Activated CD4-positive, alpha-beta T cell treated with anti-CD3 and anti-CD28 coated beads for 36 hours (primary cell): ENCODE measurements at regions of chr3 and their contacts with region 1.

Region 1: DNA sequence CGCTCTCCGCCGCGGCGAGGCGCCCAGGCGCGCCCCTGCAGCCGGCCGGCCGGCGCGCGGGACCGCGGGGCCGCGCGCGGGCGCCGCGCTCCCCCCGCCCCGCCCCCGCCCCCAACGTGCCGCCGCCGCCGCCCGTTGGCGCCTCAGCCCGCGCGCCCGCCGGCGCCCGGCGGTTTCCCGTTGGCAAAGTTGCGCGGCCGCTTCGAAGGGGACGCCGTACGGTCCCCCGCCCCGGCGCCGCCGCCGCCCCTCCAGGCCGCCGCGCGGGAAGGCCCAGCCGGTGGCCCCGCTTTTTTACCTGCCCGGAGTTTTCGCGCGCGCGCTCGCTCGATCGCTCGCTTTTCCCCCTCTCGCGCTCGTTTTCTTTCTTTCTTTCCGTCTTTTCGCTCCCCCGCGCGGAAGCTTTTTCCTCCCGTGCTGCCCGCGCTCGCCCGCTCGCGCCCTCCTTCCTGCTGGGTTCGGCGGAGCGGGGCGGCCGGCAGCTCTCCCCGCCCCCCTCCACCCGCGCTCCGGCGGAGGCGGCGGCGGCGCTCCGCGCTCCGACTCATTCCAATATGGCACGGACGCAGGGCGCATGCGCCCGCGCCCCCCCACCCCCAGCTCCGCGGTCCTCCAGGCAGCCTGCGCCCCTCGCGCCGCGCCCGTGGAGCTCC is at the start of gene SFMBT1:
- DNase-seq: peak; percentile 87
- ATAC-seq: peak; percentile 62
- H3K4me3 Mint-ChIP-seq: peak within 1 kb of the TSS; percentile 93
- H3K27ac Mint-ChIP-seq: peak within 1 kb of the TSS; percentile 96
- H3K4me1 Mint-ChIP-seq: peaks cover 43% of the 10 kb centered on the region
- H3K27me3 Mint-ChIP-seq: no peaks in the 10 kb centered on the region
- total RNA-seq, gene SFMBT1: 14.5 to 20.3 TPM

Region 2: DNA sequence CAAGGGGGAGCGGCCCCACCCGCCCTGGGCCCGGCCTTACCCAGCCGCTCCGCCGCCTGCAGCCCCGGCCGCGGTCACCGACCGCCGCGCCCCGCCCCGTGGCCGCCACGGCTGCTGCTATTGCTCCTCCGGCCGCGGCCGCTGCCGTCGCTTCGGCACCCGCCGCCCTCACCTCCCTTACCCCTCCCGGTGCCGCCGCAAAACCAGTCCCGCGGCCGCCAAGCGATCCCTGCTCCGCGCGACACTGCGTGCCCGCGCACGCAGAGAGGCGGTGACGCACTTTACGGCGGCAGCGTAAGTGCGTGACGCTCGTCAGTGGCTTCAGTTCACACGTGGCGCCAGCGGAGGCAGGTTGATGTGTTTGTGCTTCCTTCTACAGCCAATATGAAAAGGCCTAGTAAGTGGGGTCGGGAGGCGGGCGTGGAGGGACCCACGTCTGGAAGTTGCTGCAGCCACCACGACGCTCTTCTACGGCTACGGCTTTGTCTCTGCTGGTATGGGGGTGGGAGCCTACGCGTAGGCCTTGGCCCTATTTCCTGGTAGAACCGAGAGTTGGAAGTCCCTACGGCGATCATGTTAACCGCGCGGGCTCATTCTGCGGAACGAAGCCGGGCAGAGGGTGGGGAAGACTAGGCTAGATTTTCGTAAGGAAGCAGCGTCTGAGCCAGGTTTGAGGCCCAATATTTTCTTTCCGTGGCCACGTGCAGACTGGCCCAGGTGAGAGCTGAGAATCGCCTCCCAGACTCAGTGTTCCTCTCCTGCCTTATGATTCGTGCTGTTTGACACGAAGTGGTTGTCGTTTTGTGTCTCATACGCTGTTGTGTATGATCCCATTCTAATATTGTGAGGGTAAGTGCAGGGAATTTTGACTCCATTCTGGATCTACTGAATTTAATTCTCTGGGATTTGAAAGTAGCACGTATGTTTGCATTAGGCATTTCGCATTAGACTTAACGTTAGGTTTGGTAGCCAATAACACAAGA is 359.6 kb before region 1 on chr3 and contains the starts of genes GNL3 and PBRM1:
- CTCF ChIA-PET with region 1: no interaction called
- POLR2A ChIA-PET with region 1: no interaction called
- intact Hi-C with region 1: loop called in 1 of 2 experiments (anchors 1 kb)
- DNase-seq: peak; percentile 97
- ATAC-seq: peak; percentile 70
- H3K4me3 Mint-ChIP-seq: peak within 1 kb of the TSS; percentile 99
- H3K27ac Mint-ChIP-seq: peak within 1 kb of the TSS; percentile 99
- H3K4me1 Mint-ChIP-seq: peaks cover 75% of the 10 kb centered on the region
- H3K27me3 Mint-ChIP-seq: no peaks in the 10 kb centered on the region
- total RNA-seq, gene GNL3: 206 to 218 TPM
- total RNA-seq, gene PBRM1: 57.6 to 59.8 TPM

Region 3: DNA sequence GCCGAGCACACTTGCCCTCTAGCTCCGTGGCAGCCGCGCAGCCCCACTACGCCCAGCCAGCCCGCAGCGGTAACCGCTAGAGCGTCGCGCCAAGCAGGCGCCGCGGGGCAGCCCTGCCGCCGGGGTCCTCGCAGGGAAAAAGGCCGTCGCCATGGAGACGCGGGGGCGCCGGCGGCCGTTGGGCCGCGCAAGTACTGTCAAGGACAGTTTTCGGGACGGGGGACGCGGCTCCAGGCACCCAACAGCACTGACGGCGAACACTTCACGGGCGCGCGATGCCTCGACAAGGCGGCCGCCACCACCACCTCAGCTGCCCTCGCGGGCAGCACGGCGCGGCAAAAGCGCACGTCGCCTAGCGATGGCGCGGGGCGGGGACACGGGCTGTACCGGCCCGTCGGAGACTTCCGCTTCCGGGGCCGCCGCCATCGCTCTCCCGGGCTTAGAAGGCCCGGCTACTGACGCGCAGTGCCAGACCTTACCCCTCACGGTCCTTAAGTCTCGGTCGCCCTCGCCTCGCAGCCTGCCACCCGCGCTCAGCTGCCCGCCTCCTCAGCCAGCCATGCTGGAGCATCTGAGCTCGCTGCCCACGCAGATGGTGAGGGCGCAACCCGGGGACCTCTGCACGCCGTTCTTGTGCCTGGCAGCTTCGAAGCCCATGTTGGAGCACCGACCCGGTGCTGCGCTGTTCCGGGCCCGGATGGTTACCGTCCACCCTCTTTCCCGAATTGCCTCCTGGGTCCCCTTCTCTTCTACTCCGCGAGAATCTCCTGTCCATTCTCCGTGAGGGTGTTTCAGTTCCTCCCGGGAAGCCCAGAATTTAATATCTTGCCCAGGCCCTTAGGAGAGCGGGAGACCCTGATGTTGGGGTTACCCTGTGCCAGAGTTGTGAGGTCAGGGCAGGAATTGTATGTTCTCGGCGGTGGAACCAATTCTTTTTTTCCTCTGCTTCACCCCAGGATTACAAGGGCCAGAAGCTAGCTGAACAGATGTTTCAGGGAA is 339.7 kb before region 1 on chr3 and contains the starts of genes GLT8D1 and SPCS1:
- CTCF ChIA-PET with region 1: no interaction called
- POLR2A ChIA-PET with region 1: no interaction called
- intact Hi-C with region 1: loop called (anchors 1 to 10 kb)
- DNase-seq: peak; percentile 92
- ATAC-seq: peak; percentile 94
- H3K4me3 Mint-ChIP-seq: peak within 1 kb of the TSS; percentile 89
- H3K27ac Mint-ChIP-seq: peak within 1 kb of the TSS; percentile 90
- H3K4me1 Mint-ChIP-seq: peaks cover 28% of the 10 kb centered on the region
- H3K27me3 Mint-ChIP-seq: no peaks in the 10 kb centered on the region
- total RNA-seq, gene GLT8D1: 35.2 to 38.0 TPM
- total RNA-seq, gene SPCS1: 111 to 120 TPM

Region 4: GRCh38 chr3:52934630-52935530 is 110.8 kb before region 1 on chr3:
- CTCF ChIA-PET with region 1: interaction called, 5 read pairs
- POLR2A ChIA-PET with region 1: interaction called, 4 read pairs
- intact Hi-C with region 1: loop called in 1 of 2 experiments (anchors 1 kb)
- DNase-seq: peak; percentile 75
- ATAC-seq: peak; percentile 99
- H3K4me3 Mint-ChIP-seq: no peak overlapping the region
- H3K27ac Mint-ChIP-seq: no peak overlapping the region
- H3K4me1 Mint-ChIP-seq: peaks cover 12% of the 10 kb centered on the region
- H3K27me3 Mint-ChIP-seq: no peaks in the 10 kb centered on the region

Region 5: GRCh38 chr3:53072653-53073552 is 27.3 kb after region 1 on chr3:
- CTCF ChIA-PET with region 1: no interaction called
- POLR2A ChIA-PET with region 1: interaction called, 3 read pairs
- intact Hi-C with region 1: loop called (anchors 1 to 2 kb)
- DNase-seq: peak; percentile 95
- ATAC-seq: peak; percentile 94
- H3K4me3 Mint-ChIP-seq: peak overlapping the region; percentile 81
- H3K27ac Mint-ChIP-seq: peak overlapping the region; percentile 97
- H3K4me1 Mint-ChIP-seq: peaks cover 18% of the 10 kb centered on the region
- H3K27me3 Mint-ChIP-seq: no peaks in the 10 kb centered on the region

Region 6: DNA sequence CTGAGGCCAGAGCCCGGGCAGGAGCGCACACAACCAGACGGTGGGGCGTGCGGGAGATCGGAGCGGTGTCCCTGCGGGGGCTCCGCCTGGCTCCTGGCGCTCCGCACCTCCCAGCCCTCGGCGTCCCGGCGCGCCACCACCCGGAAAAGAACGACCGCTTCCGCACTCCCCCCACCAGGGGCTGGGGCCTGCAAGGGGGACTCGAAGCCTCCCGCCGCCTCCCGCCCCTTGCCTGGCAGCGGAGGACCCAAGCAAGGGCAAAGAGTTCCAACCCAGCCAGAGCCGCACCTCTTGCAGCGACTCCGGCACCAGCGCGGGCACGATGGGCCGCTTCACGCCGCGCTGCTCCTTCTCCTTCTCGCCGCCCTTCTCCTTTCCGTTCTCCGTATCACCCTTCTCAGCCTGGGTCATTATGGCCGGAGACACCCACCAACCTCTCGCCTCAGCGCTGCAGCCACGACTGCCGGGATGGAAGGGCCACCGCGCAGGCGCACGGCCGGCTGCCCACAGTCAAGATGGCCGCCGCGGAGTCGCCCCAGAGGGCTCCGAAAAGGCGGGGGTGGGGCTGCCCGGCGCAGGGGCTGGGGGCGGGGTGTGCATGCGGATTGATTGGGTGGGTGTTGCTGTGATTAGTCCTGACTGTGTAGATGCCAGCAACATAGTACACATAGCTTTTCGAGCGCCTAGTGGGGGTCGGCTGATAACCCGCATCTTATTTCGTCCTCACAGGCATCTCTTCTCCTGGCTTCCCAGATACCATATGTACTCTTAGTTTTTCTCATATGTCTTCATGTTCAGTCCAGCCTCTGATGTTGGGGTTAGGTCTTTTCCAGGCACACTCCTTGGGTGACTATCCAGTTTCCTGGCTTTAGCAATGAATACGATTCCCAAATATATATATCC is 836.3 kb after region 1 on chr3 and contains the start of gene ACTR8:
- CTCF ChIA-PET with region 1: no interaction called
- POLR2A ChIA-PET with region 1: no interaction called
- intact Hi-C with region 1: loop called in 1 of 2 experiments (anchors 10 kb)
- DNase-seq: peak; percentile 90
- ATAC-seq: peak; percentile 92
- H3K4me3 Mint-ChIP-seq: peak within 1 kb of the TSS; percentile 100
- H3K27ac Mint-ChIP-seq: peak within 1 kb of the TSS; percentile 99
- H3K4me1 Mint-ChIP-seq: peaks cover 20% of the 10 kb centered on the region
- H3K27me3 Mint-ChIP-seq: no peaks in the 10 kb centered on the region
- total RNA-seq, gene ACTR8: 26.0 to 28.9 TPM